Activated T-helper 1 cell treated with anti-CD3 and anti-CD28 coated beads, Interleukin-12 subunit alpha, Interleukin-12 subunit beta, Interleukin-2, Interleukin-4 antibody, amounts not matched to agents 30 ng/mL and 10 ng/mL and 1 ng/mL, durations not matched to agents 14 hours and 24 hours and 36 hours (primary cell): ENCODE measurements at regions of chrX and their contacts with region 1.

Region 1: DNA sequence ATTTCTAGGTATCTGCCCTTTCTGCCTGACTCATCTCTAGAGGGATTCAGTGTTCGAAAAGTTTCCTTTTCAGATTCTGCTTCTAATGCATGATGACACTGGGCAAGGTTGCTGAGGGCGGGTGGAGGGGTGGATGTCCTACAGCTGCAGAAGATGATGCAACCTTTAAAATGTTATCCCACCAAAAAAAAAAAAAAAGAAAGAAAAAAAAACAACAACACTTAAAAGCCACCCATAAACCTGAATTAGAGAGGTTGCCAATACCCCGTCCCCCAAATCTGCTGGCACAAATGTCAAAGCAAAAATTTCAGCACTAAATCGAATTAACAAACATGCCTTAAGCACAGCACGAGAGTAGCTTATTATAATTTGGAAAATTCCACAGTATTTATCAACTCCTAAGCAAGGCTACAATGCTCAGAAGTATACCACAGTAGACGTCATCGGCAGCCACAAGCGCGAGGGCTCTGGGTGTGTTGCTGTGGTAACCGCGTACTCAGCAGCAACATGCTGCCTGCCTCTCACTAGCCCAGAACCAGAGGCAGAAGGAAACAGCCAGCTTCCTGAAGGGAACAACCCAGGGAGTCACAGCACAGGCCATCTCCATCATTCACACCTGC is 167.5 kb upstream of the MAP3K15 start:
- DNase-seq: peak; percentile 76
- H3K4me3 Mint-ChIP-seq: peak overlapping the region; percentile 59
- H3K27ac Mint-ChIP-seq: peak overlapping the region; percentile 98
- H3K4me1 Mint-ChIP-seq: peaks cover 88% of the 10 kb centered on the region
- H3K27me3 Mint-ChIP-seq: no peaks in the 10 kb centered on the region

Region 2: GRCh38 chrX:19625612-19626011 is 57.2 kb before region 1 on chrX:
- intact Hi-C with region 1: loop called (anchors 1 kb)
- DNase-seq: peak; percentile 42
- H3K4me3 Mint-ChIP-seq: peak overlapping the region; percentile 70
- H3K27ac Mint-ChIP-seq: peak overlapping the region; percentile 95
- H3K4me1 Mint-ChIP-seq: peaks cover 60% of the 10 kb centered on the region
- H3K27me3 Mint-ChIP-seq: peaks cover 3% of the 10 kb centered on the region

Region 3: DNA sequence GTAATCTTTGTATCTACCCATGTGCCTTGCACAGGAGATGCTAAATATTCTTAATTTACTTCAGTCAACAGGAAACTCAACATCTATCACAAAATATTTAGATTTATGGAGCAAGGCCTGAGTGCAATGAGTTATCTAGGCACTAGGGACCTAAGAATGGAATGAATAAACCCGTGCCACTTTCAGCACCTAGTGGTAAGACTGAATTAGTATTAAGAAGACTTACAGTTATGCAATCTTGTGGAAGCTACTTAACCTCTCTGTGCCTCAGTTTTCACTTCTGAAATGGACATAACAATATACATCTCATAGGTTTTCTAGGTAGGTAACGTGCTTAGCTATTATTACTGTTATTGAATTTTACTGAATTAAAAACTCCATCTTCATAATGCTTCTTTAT is 22.9 kb before region 1 on chrX:
- intact Hi-C with region 1: loop called (anchors 2 kb)
- DNase-seq: no peak
- H3K4me3 Mint-ChIP-seq: no peak overlapping the region
- H3K27ac Mint-ChIP-seq: no peak overlapping the region
- H3K4me1 Mint-ChIP-seq: peaks cover 29% of the 10 kb centered on the region
- H3K27me3 Mint-ChIP-seq: no peaks in the 10 kb centered on the region

Region 4: GRCh38 chrX:19747652-19748610 is 65.1 kb after region 1 on chrX:
- intact Hi-C with region 1: loop called (anchors 2 kb)
- DNase-seq: peak; percentile 72
- H3K4me3 Mint-ChIP-seq: peak overlapping the region; percentile 67
- H3K27ac Mint-ChIP-seq: peak overlapping the region; percentile 93
- H3K4me1 Mint-ChIP-seq: peaks cover 91% of the 10 kb centered on the region
- H3K27me3 Mint-ChIP-seq: no peaks in the 10 kb centered on the region

Region 5: DNA sequence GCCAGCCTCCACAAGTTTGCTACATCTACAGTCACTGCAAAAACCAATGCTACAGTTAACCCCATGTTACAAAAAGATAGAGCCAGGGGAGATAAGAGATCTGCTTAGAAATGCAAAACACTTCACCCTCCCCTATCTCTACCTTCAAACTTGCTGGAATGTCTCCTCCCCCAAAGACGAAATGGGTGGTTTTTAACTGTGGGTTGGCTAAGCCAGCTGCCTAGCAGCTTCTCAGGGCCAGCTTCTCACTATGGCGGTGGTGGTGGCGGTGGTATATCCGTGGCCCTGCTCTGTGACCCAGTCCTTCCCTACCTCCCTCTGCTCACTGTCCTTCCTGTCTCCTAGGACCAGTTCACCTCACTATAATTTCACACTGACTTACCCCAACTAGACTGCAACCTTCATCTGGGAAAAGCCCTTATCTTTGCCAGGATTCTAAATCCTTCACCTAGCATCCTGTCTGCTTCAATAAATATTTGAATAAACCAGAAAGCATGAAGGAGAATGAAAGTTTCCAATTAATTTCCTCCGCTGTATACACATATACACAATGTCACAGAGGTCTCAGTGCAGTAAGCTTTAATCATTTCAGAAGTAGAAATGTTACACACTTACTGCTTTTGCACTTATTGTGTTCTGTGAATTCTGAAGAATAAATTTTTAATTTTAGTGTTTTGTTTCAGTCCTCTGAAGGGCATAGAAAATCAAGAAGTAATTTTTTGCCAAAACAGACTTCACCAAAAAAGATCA is 158.3 kb after region 1 on chrX:
- intact Hi-C with region 1: loop called (anchors 2 kb)
- DNase-seq: peak; percentile 37
- H3K4me3 Mint-ChIP-seq: peak overlapping the region; percentile 41
- H3K27ac Mint-ChIP-seq: peak overlapping the region; percentile 85
- H3K4me1 Mint-ChIP-seq: peaks cover 41% of the 10 kb centered on the region
- H3K27me3 Mint-ChIP-seq: no peaks in the 10 kb centered on the region

Region 6: GRCh38 chrX:19875050-19875431 is 192.2 kb after region 1 on chrX:
- intact Hi-C with region 1: no loop called
- DNase-seq: no peak
- H3K4me3 Mint-ChIP-seq: peak overlapping the region; percentile 45
- H3K27ac Mint-ChIP-seq: peak overlapping the region; percentile 29
- H3K4me1 Mint-ChIP-seq: peaks cover 36% of the 10 kb centered on the region
- H3K27me3 Mint-ChIP-seq: no peaks in the 10 kb centered on the region